IMR-90 (cell line): ENCODE measurements at regions of chr11 and their contacts with region 1.

Region 1: GRCh38 chr11:114340311-114341131 is 44.3 kb downstream of the NNMT start:
- DNase-seq: peak; percentile 82
- ATAC-seq: peak; percentile 97
- H3K4me3 ChIP-seq: no peak overlapping the region
- H3K27ac ChIP-seq: no peak overlapping the region
- H3K4me1 ChIP-seq: no peaks in the 10 kb centered on the region
- H3K27me3 ChIP-seq: no peaks in the 10 kb centered on the region; the same call in 1 of the 2 replicates
- CTCF ChIP-seq: peak; percentile 86
- POLR2A ChIP-seq: no peak
- RAD21 ChIP-seq: peak; percentile 95

Region 2: GRCh38 chr11:114586797-114587196 is 246.3 kb after region 1 on chr11:
- CTCF ChIA-PET with region 1: interaction called, 7 read pairs
- POLR2A ChIA-PET with region 1: no interaction called
- dilution Hi-C with region 1: no loop called
- in situ Hi-C with region 1: loop called (anchors 10 kb)
- intact Hi-C with region 1: loop called (anchors 2 kb)
- DNase-seq: peak; percentile 10
- ATAC-seq: no peak
- H3K4me3 ChIP-seq: no peak overlapping the region
- H3K27ac ChIP-seq: no peak overlapping the region
- H3K4me1 ChIP-seq: no peaks in the 10 kb centered on the region
- H3K27me3 ChIP-seq: no peaks in the 10 kb centered on the region
- CTCF ChIP-seq: peak; percentile 47
- POLR2A ChIP-seq: no peak
- RAD21 ChIP-seq: peak; percentile 57

Region 3: GRCh38 chr11:114606003-114606801 is 265.7 kb after region 1 on chr11:
- CTCF ChIA-PET with region 1: no interaction called
- POLR2A ChIA-PET with region 1: no interaction called
- dilution Hi-C with region 1: no loop called
- in situ Hi-C with region 1: no loop called
- intact Hi-C with region 1: loop called (anchors 1 kb)
- DNase-seq: peak; percentile 3
- ATAC-seq: no peak
- H3K4me3 ChIP-seq: no peak overlapping the region
- H3K27ac ChIP-seq: no peak overlapping the region
- H3K4me1 ChIP-seq: no peaks in the 10 kb centered on the region
- H3K27me3 ChIP-seq: no peaks in the 10 kb centered on the region
- CTCF ChIP-seq: 0 out of 2 replicates have a peak, but pooled peaks have one; percentile 15
- POLR2A ChIP-seq: no peak
- RAD21 ChIP-seq: peak; percentile 22

Region 4: DNA sequence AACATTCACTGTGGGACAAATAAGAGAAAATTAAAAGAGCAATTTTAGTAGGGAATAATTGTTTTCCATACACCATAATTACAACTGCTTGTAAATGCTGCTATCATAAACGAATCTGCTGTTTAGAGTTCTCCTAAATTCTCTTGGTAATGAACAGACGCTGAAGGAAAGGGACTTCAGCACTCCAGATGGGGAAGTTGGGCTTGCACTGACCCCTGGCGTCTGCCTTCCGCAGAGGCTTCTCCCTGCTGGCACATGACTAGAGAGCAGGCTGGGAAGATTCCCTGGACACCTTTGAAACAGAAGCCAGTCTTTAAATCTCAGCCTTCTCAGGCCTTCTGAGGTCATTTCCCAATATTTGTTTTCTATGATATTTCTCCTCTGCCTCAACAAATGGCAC is 421.9 kb after region 1 on chr11:
- CTCF ChIA-PET with region 1: interaction called, 4 read pairs
- POLR2A ChIA-PET with region 1: no interaction called
- dilution Hi-C with region 1: no loop called
- in situ Hi-C with region 1: loop called (anchors 5 kb)
- intact Hi-C with region 1: loop called (anchors 1 kb)
- DNase-seq: peak; percentile 54
- ATAC-seq: peak; percentile 91
- H3K4me3 ChIP-seq: no peak overlapping the region
- H3K27ac ChIP-seq: no peak overlapping the region
- H3K4me1 ChIP-seq: no peaks in the 10 kb centered on the region
- H3K27me3 ChIP-seq: no peaks in the 10 kb centered on the region
- CTCF ChIP-seq: peak; percentile 78
- POLR2A ChIP-seq: no peak
- RAD21 ChIP-seq: peak; percentile 80

Region 5: GRCh38 chr11:114774599-114775361 is 434.3 kb after region 1 on chr11:
- CTCF ChIA-PET with region 1: no interaction called
- POLR2A ChIA-PET with region 1: no interaction called
- dilution Hi-C with region 1: no loop called
- in situ Hi-C with region 1: loop called (anchors 5 kb)
- intact Hi-C with region 1: no loop called
- DNase-seq: peak; percentile 46
- ATAC-seq: peak; percentile 98
- H3K4me3 ChIP-seq: no peak overlapping the region
- H3K27ac ChIP-seq: no peak overlapping the region
- H3K4me1 ChIP-seq: no peaks in the 10 kb centered on the region
- H3K27me3 ChIP-seq: peaks cover 2% of the 10 kb centered on the region; the same call in 1 of the 2 replicates
- CTCF ChIP-seq: peak; percentile 78
- POLR2A ChIP-seq: no peak
- RAD21 ChIP-seq: peak; percentile 89

Region 6: DNA sequence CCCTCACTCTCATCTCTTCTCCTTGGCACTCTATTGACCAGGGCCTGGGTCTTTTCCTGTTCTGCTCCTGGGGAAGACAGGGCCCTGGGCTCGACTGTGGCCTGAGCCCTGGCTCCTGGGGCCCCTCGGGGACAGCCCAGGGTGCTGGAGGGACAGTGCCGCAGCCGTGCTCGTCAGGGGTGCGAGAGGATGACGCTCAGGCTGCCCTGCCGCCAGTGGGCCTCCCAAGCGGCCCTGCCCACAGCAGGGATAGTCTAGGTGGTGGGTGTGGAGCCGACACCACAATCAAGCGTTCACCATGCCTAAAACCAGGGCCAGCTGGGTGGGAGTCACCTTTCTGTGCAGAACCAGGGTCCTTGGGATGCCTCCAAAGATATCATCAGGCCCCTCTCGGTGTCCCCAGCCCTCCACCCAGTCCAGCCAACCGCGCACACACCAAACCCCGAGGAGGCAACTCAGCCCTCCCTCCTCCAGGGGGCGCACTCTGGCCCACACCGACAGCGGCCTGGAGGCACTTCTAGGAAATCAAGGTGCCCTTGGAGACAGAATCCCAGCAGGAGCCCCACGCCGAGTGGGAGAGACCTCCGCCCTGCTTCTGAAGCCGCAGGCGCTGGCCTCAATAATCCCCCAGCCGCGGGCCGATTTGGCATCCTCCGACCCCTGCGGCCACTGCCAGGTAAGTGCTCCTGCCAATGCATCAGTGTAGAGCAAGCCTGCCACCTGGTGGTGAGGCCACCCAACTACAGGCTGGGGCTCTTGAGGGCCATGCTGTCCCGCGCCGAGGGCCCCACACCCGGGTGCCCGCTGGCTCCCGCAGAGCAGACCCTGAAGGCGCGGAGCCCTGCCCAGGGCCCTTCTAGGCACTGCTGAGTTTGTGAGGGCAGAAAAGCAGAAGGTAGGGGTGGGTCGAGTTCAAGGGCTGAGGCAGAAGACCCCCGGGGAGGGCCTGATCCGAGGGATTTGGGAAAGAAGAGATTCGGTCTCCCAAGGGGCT is 1935.8 kb after region 1 on chr11:
- CTCF ChIA-PET with region 1: no interaction called
- POLR2A ChIA-PET with region 1: no interaction called
- dilution Hi-C with region 1: no loop called
- in situ Hi-C with region 1: loop called (anchors 25 kb)
- intact Hi-C with region 1: no loop called
- DNase-seq: peak; percentile 30
- ATAC-seq: peak; percentile 60; the same call in 1 of the 2 replicates
- H3K4me3 ChIP-seq: no peak overlapping the region
- H3K27ac ChIP-seq: no peak overlapping the region
- H3K4me1 ChIP-seq: no peaks in the 10 kb centered on the region
- H3K27me3 ChIP-seq: no peaks in the 10 kb centered on the region; the same call in 1 of the 2 replicates
- CTCF ChIP-seq: peak; percentile 63
- POLR2A ChIP-seq: no peak
- RAD21 ChIP-seq: peak; percentile 74